AG04449 (cell line): ENCODE measurements at regions of chr7 and their contacts with region 1.

Region 1: GRCh38 chr7:31758755-31759154 is 71.7 kb downstream of the PPP1R17 start:
- DNase-seq: no peak
- H3K4me3 ChIP-seq: no peak overlapping the region
- CTCF ChIP-seq: no peak

Region 2: DNA sequence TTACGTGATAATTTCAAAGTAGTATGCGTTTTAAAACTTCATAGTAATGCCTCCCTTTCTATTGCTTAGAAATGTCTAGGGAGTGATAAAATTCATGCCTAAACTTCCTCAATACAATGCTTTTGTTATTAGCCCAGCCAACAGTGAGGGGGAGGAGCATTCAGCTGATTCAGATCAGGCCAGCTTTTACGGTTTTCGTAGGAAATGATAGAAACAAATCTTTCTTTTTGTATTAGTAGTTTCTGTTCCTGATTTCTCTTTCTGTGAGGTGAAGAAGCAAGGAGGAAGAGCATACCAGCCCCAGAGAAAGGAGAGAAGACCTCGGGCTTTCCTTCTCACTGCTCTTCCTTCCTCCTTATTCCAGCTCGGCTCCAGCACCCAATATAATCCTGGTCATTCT is 280.0 kb before region 1 on chr7:
- CTCF ChIA-PET with region 1: no interaction called
- POLR2A ChIA-PET with region 1: no interaction called
- DNase-seq: no peak
- H3K4me3 ChIP-seq: no peak overlapping the region
- CTCF ChIP-seq: no peak

Region 3: GRCh38 chr7:31648288-31648687 is 110.5 kb before region 1 on chr7:
- CTCF ChIA-PET with region 1: no interaction called
- POLR2A ChIA-PET with region 1: no interaction called
- DNase-seq: no peak
- H3K4me3 ChIP-seq: no peak overlapping the region
- CTCF ChIP-seq: peak; percentile 8

Region 4: DNA sequence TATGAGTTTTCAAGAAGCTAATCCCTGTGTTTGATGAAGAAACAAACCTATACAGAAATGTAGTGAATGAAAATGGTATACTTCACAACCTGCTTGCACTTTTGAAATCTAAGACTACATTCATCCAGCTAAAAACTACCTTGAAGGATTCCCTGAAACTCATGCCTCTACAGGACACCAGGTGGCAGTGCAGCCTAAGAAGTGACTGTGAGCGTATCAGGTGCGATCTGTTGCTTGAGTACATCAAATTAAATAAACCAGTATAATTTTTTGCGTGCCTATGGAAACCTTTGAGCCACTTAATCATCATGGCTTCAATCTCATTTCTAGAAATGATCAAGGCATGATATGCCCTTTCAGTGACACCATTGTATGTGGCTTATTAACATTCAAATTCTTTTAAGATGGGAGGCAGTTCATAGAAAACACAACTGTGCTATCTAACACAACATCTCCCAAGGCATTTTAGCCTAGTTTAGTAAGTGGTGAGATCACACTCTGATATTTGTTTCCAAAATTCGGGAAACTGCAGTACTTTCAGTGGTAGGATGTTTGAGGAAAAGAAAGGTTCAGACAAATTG is 14.4 kb before region 1 on chr7:
- CTCF ChIA-PET with region 1: interaction called, 10 read pairs
- POLR2A ChIA-PET with region 1: no interaction called
- DNase-seq: peak; percentile 29
- H3K4me3 ChIP-seq: no peak overlapping the region
- CTCF ChIP-seq: peak; percentile 76

Region 5: GRCh38 chr7:32191305-32191704 is 432.6 kb after region 1 on chr7:
- CTCF ChIA-PET with region 1: no interaction called
- POLR2A ChIA-PET with region 1: no interaction called
- DNase-seq: no peak
- H3K4me3 ChIP-seq: no peak overlapping the region
- CTCF ChIP-seq: no peak